Activated T-helper 1 cell treated with anti-CD3 and anti-CD28 coated beads, Interleukin-12 subunit alpha, Interleukin-12 subunit beta, Interleukin-2, Interleukin-4 antibody, amounts not matched to agents 30 ng/mL and 10 ng/mL and 1 ng/mL, durations not matched to agents 14 hours and 24 hours and 36 hours (primary cell): ENCODE measurements at regions of chr2 and their contacts with region 1.

Region 1: GRCh38 chr2:183428881-183429280 is 304.6 kb downstream of the NUP35 start:
- DNase-seq: no peak
- H3K4me3 Mint-ChIP-seq: no peak overlapping the region
- H3K27ac Mint-ChIP-seq: no peak overlapping the region
- H3K4me1 Mint-ChIP-seq: no peaks in the 10 kb centered on the region
- H3K27me3 Mint-ChIP-seq: no peaks in the 10 kb centered on the region

Region 2: DNA sequence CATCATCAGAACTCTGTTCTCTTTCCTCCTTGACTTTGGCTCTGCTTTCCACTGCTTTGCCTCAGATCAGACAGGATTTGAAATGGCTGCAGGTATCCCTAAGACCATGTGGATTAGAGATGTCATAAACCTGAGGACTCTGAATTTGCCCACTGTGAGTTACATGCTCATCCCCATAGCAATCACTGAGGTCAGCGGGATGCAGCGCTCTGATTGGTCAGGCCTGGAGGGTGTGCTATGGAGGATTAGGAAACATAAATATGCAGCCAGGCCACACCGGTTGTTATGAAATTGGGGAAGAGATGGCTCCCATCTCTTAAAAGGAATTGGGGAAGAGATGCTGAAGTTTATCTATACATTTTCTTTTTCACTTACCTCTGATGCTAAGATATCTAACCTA is 786.6 kb before region 1 on chr2:
- intact Hi-C with region 1: loop called (anchors 10 kb)
- DNase-seq: no peak
- H3K4me3 Mint-ChIP-seq: no peak overlapping the region
- H3K27ac Mint-ChIP-seq: no peak overlapping the region
- H3K4me1 Mint-ChIP-seq: no peaks in the 10 kb centered on the region
- H3K27me3 Mint-ChIP-seq: peaks cover 5% of the 10 kb centered on the region

Region 3: DNA sequence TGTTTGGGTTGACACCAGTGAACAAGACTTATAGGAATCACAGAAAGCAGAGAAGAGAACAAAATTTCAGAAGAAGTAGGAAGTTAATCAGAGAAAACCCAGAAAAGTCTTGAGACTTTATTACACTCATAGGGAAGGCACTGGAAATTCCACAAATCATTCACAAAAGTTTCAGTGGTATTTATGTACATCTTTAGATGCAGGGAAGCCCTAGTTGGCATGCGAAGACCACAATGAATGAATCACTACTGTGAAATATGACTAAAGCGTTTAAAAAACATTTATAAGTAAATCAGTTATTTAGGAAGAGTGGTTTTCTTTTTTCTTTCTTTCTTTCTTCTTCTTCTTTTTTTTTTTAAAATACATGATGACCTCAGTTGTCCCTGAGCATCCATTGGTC is 199.5 kb before region 1 on chr2:
- intact Hi-C with region 1: no loop called
- DNase-seq: no peak
- H3K4me3 Mint-ChIP-seq: no peak overlapping the region
- H3K27ac Mint-ChIP-seq: peak overlapping the region; percentile 14
- H3K4me1 Mint-ChIP-seq: peaks cover 7% of the 10 kb centered on the region
- H3K27me3 Mint-ChIP-seq: no peaks in the 10 kb centered on the region

Region 4: DNA sequence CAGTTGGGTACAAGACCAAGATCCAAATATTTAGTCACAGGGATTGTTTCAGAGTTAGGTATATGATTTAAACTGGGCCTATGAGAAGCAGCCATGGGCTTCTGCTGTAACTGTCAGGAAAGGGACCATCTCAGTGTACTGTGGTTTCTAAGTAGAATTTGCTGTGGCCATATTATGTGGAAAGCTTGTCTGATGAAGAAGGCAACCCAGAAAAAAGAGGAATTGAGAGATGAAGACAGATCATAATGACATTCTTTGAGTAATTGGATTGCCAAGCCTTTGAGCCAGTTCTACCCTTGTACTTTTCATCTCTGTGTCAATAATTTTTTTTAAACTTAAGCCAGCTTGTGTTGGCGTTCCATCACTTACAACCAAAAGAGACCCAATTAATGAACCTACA is 45.0 kb before region 1 on chr2:
- intact Hi-C with region 1: no loop called
- DNase-seq: no peak
- H3K4me3 Mint-ChIP-seq: no peak overlapping the region
- H3K27ac Mint-ChIP-seq: no peak overlapping the region
- H3K4me1 Mint-ChIP-seq: no peaks in the 10 kb centered on the region
- H3K27me3 Mint-ChIP-seq: no peaks in the 10 kb centered on the region

Region 5: GRCh38 chr2:183490914-183491313 is 62.0 kb after region 1 on chr2:
- intact Hi-C with region 1: no loop called
- DNase-seq: no peak
- H3K4me3 Mint-ChIP-seq: no peak overlapping the region
- H3K27ac Mint-ChIP-seq: no peak overlapping the region
- H3K4me1 Mint-ChIP-seq: no peaks in the 10 kb centered on the region
- H3K27me3 Mint-ChIP-seq: no peaks in the 10 kb centered on the region